B cell (primary cell): ENCODE measurements at regions of chr4 and their contacts with region 1.

Region 1: DNA sequence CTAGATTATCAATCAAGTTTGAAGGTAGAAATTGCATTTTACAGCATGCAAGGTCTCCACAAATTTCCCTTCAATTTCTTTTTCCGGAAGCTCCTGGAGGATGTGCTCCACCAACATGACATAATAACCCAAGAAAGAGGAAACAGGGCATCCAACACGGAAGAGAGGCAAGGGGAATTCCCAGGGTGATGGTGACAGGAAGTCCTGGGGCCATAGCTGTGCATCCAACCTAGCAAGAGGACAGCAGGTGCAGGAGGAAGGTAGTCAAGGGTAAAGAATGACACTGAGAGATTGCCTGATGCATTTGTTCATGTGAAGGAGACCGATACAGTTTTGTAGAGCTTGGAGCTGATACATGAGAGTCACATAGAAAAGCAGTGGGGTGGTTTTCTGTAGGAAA is 115.7 kb upstream of the LSM6 start:
- DNase-seq: peak; percentile 95
- ATAC-seq: peak; percentile 89
- H3K4me3 ChIP-seq: peak overlapping the region in 3 of 5 experiments; percentile 21 to 44 (median 41)
- H3K4me3 Mint-ChIP-seq: no peak overlapping the region
- H3K27ac ChIP-seq: peak overlapping the region; percentile 82 to 85
- H3K27ac Mint-ChIP-seq: no peak overlapping the region
- H3K4me1 ChIP-seq: peaks cover 60 to 66% of the 10 kb centered on the region in 2 donors
- H3K4me1 Mint-ChIP-seq: peaks cover 40% of the 10 kb centered on the region
- H3K27me3 ChIP-seq: peaks cover 0 to 4% (median 0%) of the 10 kb centered on the region in 4 experiments
- H3K27me3 Mint-ChIP-seq: no peaks in the 10 kb centered on the region
- CTCF ChIP-seq: no peak

Region 2: GRCh38 chr4:146029939-146030710 is 29.7 kb before region 1 on chr4:
- CTCF ChIA-PET with region 1: interaction called, 3 read pairs
- POLR2A ChIA-PET with region 1: no interaction called
- intact Hi-C with region 1: loop called (anchors 5 kb)
- DNase-seq: peak; percentile 85
- ATAC-seq: peak; percentile 99
- H3K4me3 ChIP-seq: peak overlapping the region in 2 of 5 experiments; percentile 23 to 49
- H3K4me3 Mint-ChIP-seq: peak overlapping the region; percentile 69
- H3K27ac ChIP-seq: peak overlapping the region; percentile 30 to 65
- H3K27ac Mint-ChIP-seq: peak overlapping the region; percentile 72
- H3K4me1 ChIP-seq: peaks cover 43 to 45% of the 10 kb centered on the region in 2 donors
- H3K4me1 Mint-ChIP-seq: peaks cover 52% of the 10 kb centered on the region
- H3K27me3 ChIP-seq: no peaks in the 10 kb centered on the region
- H3K27me3 Mint-ChIP-seq: no peaks in the 10 kb centered on the region
- CTCF ChIP-seq: no peak

Region 3: DNA sequence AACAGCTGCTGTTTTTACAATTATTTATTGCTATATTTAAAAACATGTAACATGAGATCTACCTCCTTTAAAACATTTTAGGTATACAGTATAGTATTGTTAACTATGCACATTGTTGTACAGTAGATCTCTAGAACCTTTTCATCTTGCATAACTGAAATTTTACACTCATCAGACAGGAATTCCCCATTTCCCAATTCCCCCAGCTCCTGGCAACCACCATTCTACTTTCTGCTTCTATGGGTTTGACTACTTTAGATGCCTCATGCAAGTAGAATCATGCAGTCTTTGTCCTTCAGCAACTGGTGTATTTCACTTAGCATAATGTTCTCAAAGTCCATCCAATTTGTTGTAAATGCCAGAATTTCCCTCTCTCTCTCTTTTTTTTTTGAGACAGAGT is 106.0 kb after region 1 on chr4:
- CTCF ChIA-PET with region 1: no interaction called
- POLR2A ChIA-PET with region 1: no interaction called
- intact Hi-C with region 1: no loop called
- DNase-seq: no peak
- ATAC-seq: no peak
- H3K4me3 ChIP-seq: no peak overlapping the region
- H3K4me3 Mint-ChIP-seq: no peak overlapping the region
- H3K27ac ChIP-seq: no peak overlapping the region
- H3K27ac Mint-ChIP-seq: no peak overlapping the region
- H3K4me1 ChIP-seq: no peaks in the 10 kb centered on the region
- H3K4me1 Mint-ChIP-seq: no peaks in the 10 kb centered on the region
- H3K27me3 ChIP-seq: no peaks in the 10 kb centered on the region
- H3K27me3 Mint-ChIP-seq: no peaks in the 10 kb centered on the region
- CTCF ChIP-seq: no peak